ENCODE measurements at regions of chr7 and their contacts with region 1.

Region 1: DNA sequence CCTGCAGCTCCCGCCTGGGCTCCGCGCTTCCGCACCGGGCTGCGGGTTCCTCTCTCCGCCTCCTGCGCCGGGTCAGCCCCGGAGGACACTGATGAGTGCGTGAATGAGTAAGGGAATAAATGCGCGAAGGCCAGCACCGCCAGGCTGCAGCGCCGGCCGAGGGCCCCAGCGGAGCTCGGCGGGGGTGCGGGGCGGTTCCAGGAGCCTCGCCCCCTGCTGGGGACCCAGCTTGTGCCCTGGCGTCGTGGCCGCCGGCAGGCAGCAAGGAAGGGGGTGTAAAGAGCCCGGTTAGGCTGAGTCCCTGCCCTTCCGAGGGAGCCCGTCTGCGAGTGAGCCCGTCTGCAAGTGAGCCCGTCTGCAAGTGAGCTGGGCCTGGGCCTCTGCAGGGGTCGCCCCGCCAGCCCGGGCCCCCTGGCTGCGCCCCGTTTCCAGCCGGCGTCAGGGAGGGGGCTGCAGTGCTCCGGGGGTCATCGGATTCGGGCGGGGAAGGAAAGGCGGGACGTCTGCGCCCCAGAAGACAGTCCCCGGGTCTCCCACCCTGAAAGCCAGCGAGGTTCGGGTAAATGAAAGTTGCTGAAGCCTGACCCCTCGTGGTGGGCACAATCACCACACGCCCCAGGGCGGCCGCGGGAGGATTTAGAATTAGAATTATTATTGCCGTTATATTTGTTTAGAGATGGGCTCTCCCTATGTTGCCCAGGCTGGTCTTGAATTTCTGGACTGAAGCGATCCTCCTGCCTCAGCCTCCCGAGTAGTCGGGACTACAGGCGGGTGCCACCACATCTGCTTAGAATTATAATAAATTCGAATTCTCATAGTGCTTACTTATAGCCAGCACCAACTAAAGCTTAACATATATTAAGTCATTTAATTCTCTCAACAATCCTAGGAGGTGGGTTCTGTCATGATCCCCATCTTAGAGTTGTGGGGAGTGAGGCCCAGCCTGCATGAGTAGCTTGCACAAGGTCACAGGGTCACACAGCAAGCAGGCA is 8.6 kb upstream of the CRYGN start:
- DNase-seq: peak; percentile 87
- ATAC-seq: peak; percentile 79
- H3K4me3 Mint-ChIP-seq: peak overlapping the region; percentile 59
- H3K27ac Mint-ChIP-seq: no peak overlapping the region
- H3K4me1 Mint-ChIP-seq: peaks cover 12% of the 10 kb centered on the region
- H3K27me3 Mint-ChIP-seq: peaks cover 4% of the 10 kb centered on the region

Region 2: GRCh38 chr7:151341357-151342101 is 107.0 kb before region 1 on chr7 and contains the start of gene NUB1:
- CTCF ChIA-PET with region 1: interaction called, 10 read pairs
- POLR2A ChIA-PET with region 1: no interaction called
- intact Hi-C with region 1: no loop called
- DNase-seq: peak; percentile 96
- ATAC-seq: peak; percentile 82
- H3K4me3 Mint-ChIP-seq: peak within 1 kb of the TSS; percentile 76
- H3K27ac Mint-ChIP-seq: peak within 1 kb of the TSS; percentile 78
- H3K4me1 Mint-ChIP-seq: peaks cover 46% of the 10 kb centered on the region
- H3K27me3 Mint-ChIP-seq: no peaks in the 10 kb centered on the region
- total RNA-seq, gene NUB1: 51.4 to 70.4 TPM

Region 3: GRCh38 chr7:151368136-151368571 is 80.4 kb before region 1 on chr7:
- CTCF ChIA-PET with region 1: interaction called, 210 read pairs
- POLR2A ChIA-PET with region 1: interaction called, 4 read pairs
- intact Hi-C with region 1: loop called (anchors 1 kb)
- DNase-seq: peak; percentile 88
- ATAC-seq: peak; percentile 100
- H3K4me3 Mint-ChIP-seq: no peak overlapping the region
- H3K27ac Mint-ChIP-seq: no peak overlapping the region
- H3K4me1 Mint-ChIP-seq: peaks cover 10% of the 10 kb centered on the region
- H3K27me3 Mint-ChIP-seq: no peaks in the 10 kb centered on the region

Region 4: GRCh38 chr7:151381348-151382078 is 67.0 kb before region 1 on chr7:
- CTCF ChIA-PET with region 1: interaction called, 10 read pairs
- POLR2A ChIA-PET with region 1: interaction called, 4 read pairs
- intact Hi-C with region 1: no loop called
- DNase-seq: peak; percentile 49
- ATAC-seq: peak; percentile 59
- H3K4me3 Mint-ChIP-seq: no peak overlapping the region
- H3K27ac Mint-ChIP-seq: no peak overlapping the region
- H3K4me1 Mint-ChIP-seq: peaks cover 10% of the 10 kb centered on the region
- H3K27me3 Mint-ChIP-seq: peaks cover 15% of the 10 kb centered on the region

Region 5: GRCh38 chr7:151408839-151409666 is 39.5 kb before region 1 on chr7:
- CTCF ChIA-PET with region 1: interaction called, 13 read pairs
- POLR2A ChIA-PET with region 1: no interaction called
- intact Hi-C with region 1: loop called (anchors 1 to 5 kb)
- DNase-seq: peak; percentile 47
- ATAC-seq: peak; percentile 47
- H3K4me3 Mint-ChIP-seq: peak overlapping the region; percentile 49
- H3K27ac Mint-ChIP-seq: peak overlapping the region; percentile 5
- H3K4me1 Mint-ChIP-seq: peaks cover 31% of the 10 kb centered on the region
- H3K27me3 Mint-ChIP-seq: peaks cover 36% of the 10 kb centered on the region

Region 6: GRCh38 chr7:151759591-151760042 is 311.1 kb after region 1 on chr7:
- CTCF ChIA-PET with region 1: interaction called, 3 read pairs
- POLR2A ChIA-PET with region 1: no interaction called
- intact Hi-C with region 1: loop called in 1 of 2 experiments (anchors 2 kb)
- DNase-seq: peak; percentile 75
- ATAC-seq: peak; percentile 40
- H3K4me3 Mint-ChIP-seq: no peak overlapping the region
- H3K27ac Mint-ChIP-seq: no peak overlapping the region
- H3K4me1 Mint-ChIP-seq: peaks cover 25% of the 10 kb centered on the region
- H3K27me3 Mint-ChIP-seq: no peaks in the 10 kb centered on the region